Common myeloid progenitor, CD34-positive (primary cell): ENCODE measurements at regions of chr3 and their contacts with region 1.

Region 1: GRCh38 chr3:156643729-156644389 is 30.5 kb upstream of the TIPARP start:
- DNase-seq: peak; percentile 92 to 97 (median 95)
- H3K4me3 ChIP-seq: peak overlapping the region in 6 of 7 experiments; percentile 8 to 60 (median 36)
- H3K27ac ChIP-seq: peak overlapping the region; percentile 76 to 88
- H3K4me1 ChIP-seq: peaks cover 16 to 45% (median 21%) of the 10 kb centered on the region in 4 experiments
- H3K27me3 ChIP-seq: no peaks in the 10 kb centered on the region

Region 2: DNA sequence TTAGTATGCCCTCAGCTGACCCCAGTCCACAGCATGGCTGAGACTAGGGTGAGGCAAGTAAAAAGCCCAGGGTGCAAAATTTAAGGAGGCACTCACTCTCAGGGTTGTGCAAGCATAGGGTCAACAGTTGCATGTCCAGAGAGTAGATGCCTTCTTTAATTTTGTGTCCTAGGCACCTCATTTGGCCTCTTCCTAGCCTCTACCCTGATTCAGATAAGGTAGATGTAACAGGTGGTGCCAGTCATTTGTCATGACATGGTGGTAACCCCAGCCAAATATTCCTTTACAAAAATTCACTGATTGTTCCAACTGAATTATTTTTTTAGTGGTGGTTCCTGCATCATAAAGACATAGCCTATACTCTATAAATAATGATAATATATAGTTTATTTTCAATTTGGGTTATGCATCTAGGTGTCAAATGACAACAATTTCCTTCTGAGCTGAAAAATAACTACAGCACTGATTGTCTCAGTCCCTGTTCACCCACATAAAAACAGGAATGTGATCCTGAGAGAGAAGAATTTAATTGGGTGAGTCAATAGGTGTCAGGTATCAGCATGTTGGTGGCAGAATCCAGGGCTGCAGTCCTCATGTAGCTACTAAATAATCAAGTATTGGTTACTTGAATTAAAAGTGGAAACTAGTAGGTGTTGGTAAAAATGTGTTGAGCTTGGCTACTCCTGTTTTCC is 13.6 kb before region 1 on chr3:
- CTCF ChIA-PET with region 1: interaction called, 13 read pairs
- POLR2A ChIA-PET with region 1: interaction called, 3 read pairs
- DNase-seq: no peak
- H3K4me3 ChIP-seq: no peak overlapping the region
- H3K27ac ChIP-seq: no peak overlapping the region
- H3K4me1 ChIP-seq: peaks cover 0 to 9% (median 0%) of the 10 kb centered on the region in 4 experiments
- H3K27me3 ChIP-seq: no peaks in the 10 kb centered on the region

Region 3: GRCh38 chr3:156787926-156788663 is 144.2 kb after region 1 on chr3:
- CTCF ChIA-PET with region 1: no interaction called
- POLR2A ChIA-PET with region 1: no interaction called
- DNase-seq: no peak
- H3K4me3 ChIP-seq: no peak overlapping the region
- H3K27ac ChIP-seq: no peak overlapping the region
- H3K4me1 ChIP-seq: peaks cover 0 to 24% (median 4%) of the 10 kb centered on the region in 4 experiments
- H3K27me3 ChIP-seq: no peaks in the 10 kb centered on the region